Activated T-helper 1 cell treated with anti-CD3 and anti-CD28 coated beads, Interleukin-12 subunit alpha, Interleukin-12 subunit beta, Interleukin-2, Interleukin-4 antibody, amounts not matched to agents 30 ng/mL and 10 ng/mL and 1 ng/mL, durations not matched to agents 14 hours and 24 hours and 36 hours (primary cell): ENCODE measurements at regions of chr6 and their contacts with region 1.

Region 1: GRCh38 chr6:30396833-30397479 is 52.0 kb downstream of the RPP21 start:
- DNase-seq: peak; percentile 74
- H3K4me3 Mint-ChIP-seq: no peak overlapping the region
- H3K27ac Mint-ChIP-seq: no peak overlapping the region
- H3K4me1 Mint-ChIP-seq: peaks cover 11% of the 10 kb centered on the region
- H3K27me3 Mint-ChIP-seq: peaks cover 41% of the 10 kb centered on the region

Region 2: GRCh38 chr6:30219244-30219643 is 177.7 kb before region 1 on chr6:
- intact Hi-C with region 1: loop called (anchors 1 kb)
- DNase-seq: peak; percentile 43
- H3K4me3 Mint-ChIP-seq: no peak overlapping the region
- H3K27ac Mint-ChIP-seq: no peak overlapping the region
- H3K4me1 Mint-ChIP-seq: peaks cover 22% of the 10 kb centered on the region
- H3K27me3 Mint-ChIP-seq: no peaks in the 10 kb centered on the region

Region 3: GRCh38 chr6:30238174-30238795 is 158.7 kb before region 1 on chr6:
- intact Hi-C with region 1: loop called (anchors 1 kb)
- DNase-seq: no peak
- H3K4me3 Mint-ChIP-seq: no peak overlapping the region
- H3K27ac Mint-ChIP-seq: no peak overlapping the region
- H3K4me1 Mint-ChIP-seq: no peaks in the 10 kb centered on the region
- H3K27me3 Mint-ChIP-seq: peaks cover 47% of the 10 kb centered on the region

Region 4: GRCh38 chr6:30357678-30358540 is 39.0 kb before region 1 on chr6:
- intact Hi-C with region 1: loop called (anchors 1 kb)
- DNase-seq: peak; percentile 16
- H3K4me3 Mint-ChIP-seq: peak overlapping the region; percentile 82
- H3K27ac Mint-ChIP-seq: no peak overlapping the region
- H3K4me1 Mint-ChIP-seq: peaks cover 10% of the 10 kb centered on the region
- H3K27me3 Mint-ChIP-seq: peaks cover 73% of the 10 kb centered on the region